ENCODE measurements at regions of chr17 and their contacts with region 1.

Region 1: GRCh38 chr17:8745586-8746500 is 1.2 kb upstream of the CCDC42 start:
- DNase-seq: peak; percentile 84
- ATAC-seq: peak; percentile 81
- H3K4me3 Mint-ChIP-seq: peak overlapping the region; percentile 85
- H3K27ac Mint-ChIP-seq: peak overlapping the region; percentile 77
- H3K4me1 Mint-ChIP-seq: peaks cover 10% of the 10 kb centered on the region
- H3K27me3 Mint-ChIP-seq: no peaks in the 10 kb centered on the region
- CTCF ChIP-seq: peak; percentile 96

Region 2: GRCh38 chr17:8572764-8573163 is 173.1 kb before region 1 on chr17:
- CTCF ChIA-PET with region 1: no interaction called
- POLR2A ChIA-PET with region 1: no interaction called
- intact Hi-C with region 1: loop called (anchors 2 kb)
- DNase-seq: no peak
- ATAC-seq: no peak
- H3K4me3 Mint-ChIP-seq: no peak overlapping the region
- H3K27ac Mint-ChIP-seq: no peak overlapping the region
- H3K4me1 Mint-ChIP-seq: no peaks in the 10 kb centered on the region
- H3K27me3 Mint-ChIP-seq: no peaks in the 10 kb centered on the region
- CTCF ChIP-seq: no peak

Region 3: DNA sequence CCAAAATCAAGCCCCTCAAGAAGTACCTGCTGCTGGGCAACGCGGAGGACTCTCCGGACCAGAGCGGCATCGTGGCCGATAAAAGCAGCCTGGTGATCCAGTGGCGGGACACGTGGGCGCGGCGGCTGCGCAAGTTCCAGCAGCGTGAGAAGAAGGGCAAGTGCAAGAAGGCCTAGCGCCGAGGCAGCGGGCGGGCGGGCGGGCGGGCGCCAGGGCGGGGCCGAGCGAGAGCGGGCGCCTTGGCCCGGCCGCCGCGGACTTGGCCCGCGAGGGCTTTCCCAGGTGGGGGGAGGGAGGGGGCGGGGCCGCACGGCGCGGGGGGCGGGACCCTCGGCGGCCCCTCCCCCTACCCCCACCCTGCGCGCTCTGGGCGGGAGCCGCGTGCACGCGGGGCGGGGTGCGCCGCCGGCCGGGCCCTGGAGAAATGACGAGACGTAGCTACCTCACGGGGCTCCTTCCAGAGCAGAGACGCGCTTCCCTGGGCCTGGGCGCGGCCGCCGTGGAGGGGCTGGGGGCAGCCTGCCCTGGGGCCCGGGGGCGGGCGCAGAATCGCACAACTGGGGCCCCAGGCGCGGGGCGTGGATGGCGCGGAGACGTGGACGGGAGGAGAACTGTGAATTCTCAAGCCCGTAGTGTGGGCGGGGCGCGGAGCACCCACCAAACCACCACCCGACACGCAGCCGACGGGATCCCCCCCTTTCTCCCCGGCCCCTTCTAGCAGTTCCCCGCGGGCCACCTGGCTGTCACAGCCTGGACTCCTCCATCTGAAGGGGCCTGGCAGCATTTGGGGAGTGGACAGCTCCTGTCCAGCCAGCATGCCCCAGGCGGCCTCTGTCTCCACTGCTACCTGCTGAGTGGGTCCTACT is 494.2 kb after region 1 on chr17:
- CTCF ChIA-PET with region 1: no interaction called
- POLR2A ChIA-PET with region 1: no interaction called
- intact Hi-C with region 1: loop called (anchors 10 kb)
- DNase-seq: peak; percentile 75
- ATAC-seq: peak; percentile 86
- H3K4me3 Mint-ChIP-seq: peak overlapping the region; percentile 82
- H3K27ac Mint-ChIP-seq: peak overlapping the region; percentile 53
- H3K4me1 Mint-ChIP-seq: peaks cover 15% of the 10 kb centered on the region
- H3K27me3 Mint-ChIP-seq: no peaks in the 10 kb centered on the region
- CTCF ChIP-seq: no peak

Region 4: GRCh38 chr17:9381060-9381459 is 635.2 kb after region 1 on chr17:
- CTCF ChIA-PET with region 1: no interaction called
- POLR2A ChIA-PET with region 1: no interaction called
- intact Hi-C with region 1: no loop called
- DNase-seq: no peak
- ATAC-seq: no peak
- H3K4me3 Mint-ChIP-seq: no peak overlapping the region
- H3K27ac Mint-ChIP-seq: no peak overlapping the region
- H3K4me1 Mint-ChIP-seq: no peaks in the 10 kb centered on the region
- H3K27me3 Mint-ChIP-seq: no peaks in the 10 kb centered on the region
- CTCF ChIP-seq: no peak

Measured in activated B cell treated with CpG ODN at 0.5 μM for 24 hours (primary cell).